Activated T-helper 1 cell treated with anti-CD3 and anti-CD28 coated beads, Interleukin-12 subunit alpha, Interleukin-12 subunit beta, Interleukin-2, Interleukin-4 antibody, amounts not matched to agents 30 ng/mL and 10 ng/mL and 1 ng/mL, durations not matched to agents 14 hours and 24 hours and 36 hours (primary cell): ENCODE measurements at regions of chr6 and their contacts with region 1.

Region 1: GRCh38 chr6:30769088-30769852 is 24.9 kb upstream of the IER3 start:
- DNase-seq: peak; percentile 69
- H3K4me3 Mint-ChIP-seq: peak overlapping the region; percentile 52
- H3K27ac Mint-ChIP-seq: peak overlapping the region; percentile 96
- H3K4me1 Mint-ChIP-seq: peaks cover 73% of the 10 kb centered on the region
- H3K27me3 Mint-ChIP-seq: no peaks in the 10 kb centered on the region

Region 2: GRCh38 chr6:30678964-30679726 is 90.1 kb before region 1 on chr6:
- intact Hi-C with region 1: loop called (anchors 1 kb)
- DNase-seq: peak; percentile 85
- H3K4me3 Mint-ChIP-seq: peak overlapping the region; percentile 94
- H3K27ac Mint-ChIP-seq: peak overlapping the region; percentile 90
- H3K4me1 Mint-ChIP-seq: peaks cover 26% of the 10 kb centered on the region
- H3K27me3 Mint-ChIP-seq: no peaks in the 10 kb centered on the region

Region 3: GRCh38 chr6:30748851-30749558 is 20.3 kb before region 1 on chr6:
- intact Hi-C with region 1: loop called (anchors 1 kb)
- DNase-seq: no peak
- H3K4me3 Mint-ChIP-seq: no peak overlapping the region
- H3K27ac Mint-ChIP-seq: no peak overlapping the region
- H3K4me1 Mint-ChIP-seq: peaks cover 42% of the 10 kb centered on the region
- H3K27me3 Mint-ChIP-seq: peaks cover 5% of the 10 kb centered on the region

Region 4: GRCh38 chr6:30814136-30815040 is 45.1 kb after region 1 on chr6:
- intact Hi-C with region 1: loop called (anchors 1 kb)
- DNase-seq: peak; percentile 47
- H3K4me3 Mint-ChIP-seq: peak overlapping the region; percentile 72
- H3K27ac Mint-ChIP-seq: peak overlapping the region; percentile 99
- H3K4me1 Mint-ChIP-seq: peaks cover 86% of the 10 kb centered on the region
- H3K27me3 Mint-ChIP-seq: peaks cover 1% of the 10 kb centered on the region

Region 5: DNA sequence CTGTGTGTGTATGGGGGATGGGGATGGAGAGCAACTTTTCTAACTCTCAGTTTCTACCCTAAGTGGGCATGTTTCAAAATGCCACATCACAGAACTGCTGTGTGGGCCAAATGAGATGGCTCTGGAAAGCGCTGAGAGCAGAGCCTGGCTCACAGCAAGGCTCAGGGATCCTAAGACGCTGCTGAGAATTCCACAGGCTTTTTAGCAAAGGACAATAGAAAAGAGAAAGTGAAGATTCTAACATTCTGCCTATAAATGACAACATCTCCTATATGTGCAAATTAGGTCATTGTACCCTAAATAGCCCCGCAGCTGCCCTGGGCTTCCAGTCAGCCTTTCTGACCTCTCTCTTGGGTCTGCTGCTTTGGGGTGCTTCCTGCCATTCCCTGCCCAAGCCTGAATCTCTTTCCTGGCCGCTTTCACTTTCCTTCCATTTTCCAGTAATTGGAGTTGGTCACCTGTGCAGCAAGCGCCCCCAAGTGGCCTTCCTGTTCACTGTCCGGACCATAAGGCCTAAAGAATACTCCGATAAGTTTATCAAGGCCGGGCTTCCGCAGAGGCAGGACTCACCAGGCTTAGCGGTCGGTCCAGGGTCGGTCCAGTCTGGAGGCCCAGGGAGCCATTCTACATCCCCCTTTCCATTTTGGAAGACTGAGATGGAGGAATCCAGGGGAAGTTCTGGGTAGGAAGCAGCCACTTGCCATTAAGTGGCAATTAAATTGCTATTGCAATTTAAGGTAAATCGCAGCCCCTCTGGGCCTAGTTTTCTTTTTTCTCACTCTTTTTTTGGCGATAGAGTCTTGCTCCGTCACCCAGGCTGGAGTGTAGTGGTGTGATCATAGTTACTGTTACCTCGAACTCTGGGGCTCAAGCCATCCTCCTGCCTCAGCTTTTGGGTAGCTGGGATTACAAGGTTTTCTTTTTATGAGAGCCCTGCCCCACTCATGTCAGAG is 108.4 kb after region 1 on chr6:
- intact Hi-C with region 1: loop called (anchors 1 kb)
- DNase-seq: peak; percentile 60
- H3K4me3 Mint-ChIP-seq: peak overlapping the region; percentile 43
- H3K27ac Mint-ChIP-seq: peak overlapping the region; percentile 75
- H3K4me1 Mint-ChIP-seq: peaks cover 43% of the 10 kb centered on the region
- H3K27me3 Mint-ChIP-seq: peaks cover 3% of the 10 kb centered on the region

Region 6: DNA sequence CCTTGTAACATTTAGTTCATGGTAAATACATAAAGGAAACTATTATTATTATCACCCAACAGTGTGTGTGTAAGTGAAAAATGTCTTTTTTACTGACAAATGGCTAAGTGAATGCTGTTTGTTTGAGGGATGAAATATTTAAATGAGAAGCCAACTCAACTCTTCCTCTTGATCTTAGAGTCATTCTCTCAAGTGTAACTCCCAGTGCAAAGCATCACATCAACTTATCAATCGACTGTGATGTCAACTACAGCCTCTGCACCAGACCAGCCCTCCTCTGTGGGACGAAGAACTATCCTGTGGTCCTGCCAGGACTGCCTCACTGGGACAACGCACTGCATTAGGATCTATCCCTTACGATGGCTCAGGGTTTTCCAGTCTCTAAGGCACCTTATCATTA is 337.8 kb after region 1 on chr6:
- intact Hi-C with region 1: no loop called
- DNase-seq: no peak
- H3K4me3 Mint-ChIP-seq: no peak overlapping the region
- H3K27ac Mint-ChIP-seq: no peak overlapping the region
- H3K4me1 Mint-ChIP-seq: no peaks in the 10 kb centered on the region
- H3K27me3 Mint-ChIP-seq: peaks cover 14% of the 10 kb centered on the region